ENCODE measurements at regions of chr6 and their contacts with region 1.

Region 1: DNA sequence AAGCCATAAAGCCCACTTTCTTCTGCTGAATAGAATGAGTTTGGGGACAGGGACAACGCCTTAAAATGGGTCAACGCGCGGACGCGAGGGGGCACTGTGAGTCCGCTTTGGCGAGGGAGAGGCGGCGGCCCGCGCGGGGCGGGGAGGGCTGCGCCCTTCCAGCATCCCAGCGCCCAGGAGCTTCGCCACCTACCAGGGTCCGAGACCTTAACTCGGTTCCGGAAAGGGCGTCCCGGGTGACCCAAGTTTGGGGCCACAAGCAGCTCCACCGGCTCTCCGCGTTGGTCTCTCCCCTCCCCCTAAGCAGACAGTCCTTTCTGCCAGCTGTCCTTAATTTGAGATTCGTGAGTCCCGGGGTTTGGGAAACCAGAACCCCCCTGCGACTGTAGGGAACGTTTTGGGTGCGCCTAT is 1.8 kb upstream of the SAMD5 start:
- DNase-seq: no peak
- H3K4me3 Mint-ChIP-seq: peak overlapping the region; percentile 62
- H3K27ac Mint-ChIP-seq: no peak overlapping the region
- H3K4me1 Mint-ChIP-seq: peaks cover 12% of the 10 kb centered on the region
- H3K27me3 Mint-ChIP-seq: peaks cover 51% of the 10 kb centered on the region

Region 2: DNA sequence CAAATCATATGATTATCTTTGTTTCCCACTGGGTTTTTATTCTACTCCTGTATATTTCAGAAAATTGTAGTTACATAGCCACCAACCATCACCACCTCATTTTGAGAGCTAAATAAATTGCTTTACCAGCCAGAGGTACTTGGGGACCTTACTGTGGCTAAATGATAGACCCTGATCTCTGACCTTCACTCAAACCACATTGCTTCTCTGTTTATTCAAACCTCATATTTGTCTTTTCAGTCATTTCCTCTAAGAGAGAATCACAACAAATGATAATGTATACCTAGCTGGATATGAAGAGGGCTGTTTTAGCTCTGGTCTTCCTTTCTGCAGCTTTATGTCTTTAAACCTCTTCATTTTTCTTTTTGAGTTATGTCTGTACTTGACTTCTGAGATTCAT is 765.1 kb before region 1 on chr6:
- intact Hi-C with region 1: no loop called
- DNase-seq: no peak
- H3K4me3 Mint-ChIP-seq: no peak overlapping the region
- H3K27ac Mint-ChIP-seq: no peak overlapping the region
- H3K4me1 Mint-ChIP-seq: no peaks in the 10 kb centered on the region
- H3K27me3 Mint-ChIP-seq: no peaks in the 10 kb centered on the region

Region 3: GRCh38 chr6:147660334-147661311 is 153.9 kb after region 1 on chr6:
- intact Hi-C with region 1: no loop called
- DNase-seq: no peak
- H3K4me3 Mint-ChIP-seq: no peak overlapping the region
- H3K27ac Mint-ChIP-seq: no peak overlapping the region
- H3K4me1 Mint-ChIP-seq: no peaks in the 10 kb centered on the region
- H3K27me3 Mint-ChIP-seq: no peaks in the 10 kb centered on the region

Region 4: DNA sequence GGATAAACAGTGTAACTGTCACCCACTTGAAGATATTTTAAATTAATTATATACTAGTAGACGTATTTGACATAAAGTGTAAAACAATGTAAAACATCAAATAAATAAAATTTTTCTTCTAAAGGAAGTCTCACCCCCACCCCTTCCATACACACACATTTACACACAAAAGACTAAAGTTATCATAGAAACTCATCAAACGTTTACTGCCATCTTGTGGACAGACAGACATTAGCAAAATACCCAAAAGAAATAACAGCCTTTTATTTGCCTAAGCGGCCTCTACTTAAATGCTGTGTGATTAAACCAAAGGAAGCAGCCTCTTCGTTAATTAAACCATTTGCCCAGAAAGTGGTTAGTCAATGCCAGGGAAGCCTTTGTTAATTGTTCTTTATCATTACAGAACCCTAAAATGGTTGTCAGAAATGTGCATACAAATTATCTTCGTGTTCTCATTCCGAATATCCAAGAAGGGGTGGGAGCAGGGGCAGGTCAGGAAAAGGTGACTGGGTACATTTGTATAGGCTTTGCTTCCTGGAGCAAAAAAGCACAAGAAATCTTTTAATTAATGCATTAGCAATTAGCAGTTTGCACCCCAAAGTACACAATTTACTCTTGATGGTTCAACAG is 659.7 kb after region 1 on chr6:
- intact Hi-C with region 1: loop called (anchors 1 kb)
- DNase-seq: no peak
- H3K4me3 Mint-ChIP-seq: no peak overlapping the region
- H3K27ac Mint-ChIP-seq: no peak overlapping the region
- H3K4me1 Mint-ChIP-seq: no peaks in the 10 kb centered on the region
- H3K27me3 Mint-ChIP-seq: no peaks in the 10 kb centered on the region

Measured in activated T-helper 2 cell treated with anti-CD3 and anti-CD28 coated beads, Interferon-gamma antibody, Interleukin-2, Interleukin-4, amounts not matched to agents 10 μg/mL and 5 μg/mL and 100 μg/mL, durations not matched to agents 14 hours and 24 hours and 36 hours (primary cell).